ENCODE measurements at regions of chr12 and their contacts with region 1.

Region 1: DNA sequence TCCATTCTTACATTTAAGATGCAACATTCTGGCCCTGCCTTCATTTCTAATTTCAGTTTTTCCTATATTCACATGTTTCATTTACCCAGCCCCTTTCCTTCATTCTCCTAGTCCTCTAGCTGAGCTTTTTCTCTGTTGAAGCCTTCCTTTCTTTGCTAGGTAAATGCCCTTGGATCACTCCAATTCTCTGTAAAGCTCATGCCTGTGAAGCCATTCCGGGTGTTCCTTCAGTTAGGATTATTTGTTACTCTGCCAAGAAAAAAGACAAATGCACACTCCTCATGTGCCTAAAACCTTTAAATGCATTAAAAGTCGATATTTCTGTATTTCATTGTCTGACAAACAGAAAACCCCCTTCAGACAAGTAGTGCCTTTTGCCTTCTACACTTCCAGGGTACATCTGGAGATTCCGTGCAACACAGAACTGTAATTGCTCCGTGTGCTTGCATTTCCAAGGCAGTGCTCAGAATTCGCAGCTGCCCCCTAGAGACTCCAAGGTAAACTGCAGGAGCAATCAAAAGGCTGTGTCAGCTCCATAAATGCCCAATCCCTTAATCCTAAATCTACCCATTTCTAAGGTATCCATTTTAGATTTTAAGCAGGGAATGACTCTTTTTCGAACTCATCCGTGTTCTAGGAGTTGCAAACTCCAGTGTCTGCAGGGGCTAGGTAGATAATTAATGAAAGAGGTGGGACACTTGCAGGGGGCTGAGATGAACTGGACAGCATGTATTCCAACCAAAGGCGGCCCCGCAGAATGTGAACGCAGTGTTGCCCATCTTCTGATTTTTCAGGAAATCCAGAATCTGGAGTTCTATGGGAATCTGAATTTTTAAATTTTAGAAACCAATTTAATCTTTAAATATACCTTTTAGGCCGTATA is 320.2 kb downstream of the GRIN2B start:
- DNase-seq: peak; percentile 76

Region 2: DNA sequence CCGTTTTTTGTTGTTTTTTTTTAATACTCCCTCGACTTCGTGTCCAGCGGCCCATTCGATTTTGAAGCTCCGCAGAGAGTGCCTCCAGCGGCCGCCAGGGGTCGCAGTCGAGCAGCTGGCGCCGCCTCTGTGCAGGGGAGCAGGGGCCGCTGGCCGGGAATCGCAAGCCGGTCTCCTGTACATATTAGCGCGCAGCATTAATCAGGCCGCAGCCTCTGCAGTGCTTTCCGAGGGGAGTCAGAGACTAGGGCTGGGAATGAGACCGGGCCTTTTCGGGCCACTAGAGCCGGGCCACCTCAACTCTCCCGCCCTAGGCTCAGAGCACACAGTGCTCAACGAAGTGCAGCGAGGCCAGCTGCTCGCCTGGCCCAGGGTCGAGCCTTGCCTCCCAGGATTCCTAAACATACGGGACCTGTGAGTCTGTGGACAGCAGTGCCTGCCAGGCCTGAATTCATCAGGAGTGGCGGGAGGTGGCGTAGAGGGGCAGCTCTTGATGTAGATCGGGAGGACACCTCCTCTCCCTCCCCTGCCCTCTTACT is 382.9 kb before region 1 on chr12:
- intact Hi-C with region 1: loop called in 1 of 2 experiments (anchors 10 kb)
- DNase-seq: peak; percentile 92

Region 3: GRCh38 chr12:15446807-15447206 is 1785.6 kb after region 1 on chr12:
- intact Hi-C with region 1: no loop called
- DNase-seq: no peak

Measured in posterior vena cava (tissue), 2 donors.